PC-9 (cell line): ENCODE measurements at regions of chr14 and their contacts with region 1.

Region 1: DNA sequence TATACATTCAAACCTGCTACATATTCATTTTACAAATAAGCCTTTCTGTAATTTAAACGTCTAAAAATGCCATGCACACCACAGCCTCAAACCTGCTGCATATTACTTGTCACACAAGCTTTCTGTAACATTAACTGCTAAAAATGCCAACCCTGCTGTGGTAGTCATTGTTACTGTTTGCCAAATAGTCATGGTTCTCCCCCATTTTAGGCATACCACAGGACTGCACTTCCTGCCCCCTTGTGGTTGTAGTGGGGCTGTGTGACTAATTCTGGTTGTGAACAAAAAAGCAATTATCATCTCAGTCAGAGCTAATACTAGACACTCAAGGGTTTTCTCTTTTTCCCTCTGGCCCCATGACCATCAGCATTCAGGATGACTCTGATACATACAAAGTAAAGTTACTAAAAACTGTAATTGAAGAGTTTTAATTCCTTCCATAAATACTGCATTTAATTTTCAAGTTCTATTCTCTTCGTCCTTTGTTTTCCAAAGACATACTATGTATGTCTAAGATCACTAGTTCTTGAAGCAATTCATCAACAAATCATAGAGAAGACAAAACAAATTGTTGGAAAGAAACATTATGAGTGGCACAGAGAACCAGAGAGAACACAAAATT is 5.7 kb upstream of the SLC35F4 start:
- DNase-seq: no peak
- H3K4me3 ChIP-seq: no peak overlapping the region
- H3K27ac ChIP-seq: no peak overlapping the region
- H3K4me1 ChIP-seq: no peaks in the 10 kb centered on the region
- H3K27me3 ChIP-seq: 0 out of 2 replicates have a peak, but pooled peaks cover 5% of the 10 kb centered on the region
- CTCF ChIP-seq: peak; percentile 65

Region 2: DNA sequence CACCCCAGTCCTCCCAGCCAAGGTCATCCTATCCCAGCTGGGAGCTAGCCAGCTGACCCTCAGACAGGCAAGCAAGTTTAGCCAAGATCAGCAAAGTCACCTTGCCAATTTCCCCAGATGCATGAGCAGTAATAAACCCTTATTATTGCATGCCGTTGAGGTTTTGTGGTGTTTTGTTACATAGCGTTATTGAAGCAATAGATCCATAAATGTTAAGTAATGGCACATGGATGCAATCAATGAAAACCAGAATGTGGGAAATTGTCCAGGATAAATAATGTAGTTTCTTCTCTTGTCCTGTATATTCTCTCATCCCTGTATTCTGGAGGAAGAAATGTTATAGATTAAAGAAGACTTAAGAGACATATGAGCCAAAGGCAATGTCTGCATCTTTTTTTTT is 1310.0 kb before region 1 on chr14:
- CTCF ChIA-PET with region 1: no interaction called
- POLR2A ChIA-PET with region 1: no interaction called
- intact Hi-C with region 1: no loop called
- DNase-seq: no peak
- H3K4me3 ChIP-seq: no peak overlapping the region
- H3K27ac ChIP-seq: no peak overlapping the region
- H3K4me1 ChIP-seq: no peaks in the 10 kb centered on the region
- H3K27me3 ChIP-seq: peaks cover 18% of the 10 kb centered on the region
- CTCF ChIP-seq: no peak

Region 3: DNA sequence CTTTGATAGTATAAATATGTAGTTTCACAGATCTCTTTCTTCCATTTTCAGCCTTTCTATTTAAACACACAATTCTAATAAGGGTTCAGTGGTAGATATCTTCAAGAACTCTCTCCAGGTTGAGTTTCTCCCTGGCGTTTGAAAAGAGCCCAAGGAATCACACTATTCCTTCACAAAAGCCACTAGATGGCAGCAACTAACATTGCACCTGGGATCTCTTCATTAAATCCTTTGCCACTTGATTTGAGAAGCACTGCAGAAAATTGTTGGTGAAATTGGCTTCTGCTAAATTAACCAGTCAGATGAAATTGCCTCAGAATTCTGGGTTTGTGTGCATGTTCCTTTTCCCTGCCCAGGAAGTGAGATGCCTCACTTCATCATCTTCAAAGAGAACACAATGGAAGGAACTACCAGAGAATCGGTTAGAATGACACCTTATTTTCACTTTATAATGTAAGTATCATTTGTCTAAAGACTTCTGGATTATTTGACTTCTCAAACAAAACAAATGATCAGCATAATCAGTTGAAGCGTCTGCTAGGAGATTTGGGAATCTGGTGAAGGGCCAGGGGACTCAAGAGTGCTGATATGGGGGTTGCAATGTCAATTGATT is 384.7 kb before region 1 on chr14:
- CTCF ChIA-PET with region 1: no interaction called
- POLR2A ChIA-PET with region 1: no interaction called
- intact Hi-C with region 1: loop called (anchors 5 kb)
- DNase-seq: no peak
- H3K4me3 ChIP-seq: no peak overlapping the region
- H3K27ac ChIP-seq: no peak overlapping the region
- H3K4me1 ChIP-seq: no peaks in the 10 kb centered on the region
- H3K27me3 ChIP-seq: peaks cover 26% of the 10 kb centered on the region
- CTCF ChIP-seq: peak; percentile 70